ENCODE measurements at regions of chr7 and their contacts with region 1.

Region 1: DNA sequence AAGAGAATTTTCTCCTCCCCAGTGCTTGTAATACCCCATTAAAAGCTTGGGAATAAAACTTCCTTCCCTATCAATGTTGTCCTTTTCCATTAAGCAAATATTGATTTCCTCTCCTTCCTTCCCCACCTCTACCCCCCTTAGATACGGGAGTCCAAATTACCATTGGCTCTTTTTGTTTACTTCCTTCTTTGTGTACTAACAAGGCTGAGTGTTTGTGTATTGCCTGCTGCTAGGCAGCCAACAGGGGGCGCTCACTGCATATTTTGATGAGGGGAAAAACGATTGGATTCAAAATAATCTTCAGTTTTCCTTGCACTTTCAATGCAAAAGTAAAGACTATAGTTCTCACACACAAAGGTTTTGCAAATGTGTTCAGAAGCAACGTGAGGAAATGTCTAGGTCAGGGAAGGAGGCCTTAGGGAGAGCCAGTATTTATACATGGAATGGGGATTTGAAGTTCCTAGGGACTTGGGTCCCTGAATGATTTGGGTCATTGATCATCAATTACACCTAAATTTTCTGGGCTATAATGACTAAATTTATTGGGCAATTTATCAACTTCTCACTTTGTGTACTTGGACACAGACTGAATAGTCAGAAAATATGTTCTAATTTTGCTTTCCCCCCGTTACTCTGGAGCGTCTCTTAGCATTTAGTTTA is 23.6 kb upstream of the VPS41 start:
- DNase-seq: peak in 1 of 2 donors; percentile 78
- ATAC-seq: peak; percentile 40

Region 2: GRCh38 chr7:39453743-39454355 is 521.2 kb after region 1 on chr7:
- intact Hi-C with region 1: loop called in 1 of 2 experiments (anchors 10 kb)
- DNase-seq: peak in 1 of 2 donors; percentile 60
- ATAC-seq: peak; percentile 76

Measured in left colon (tissue), 2 donors.